Activated naive CD4-positive, alpha-beta T cell treated with anti-CD3 and anti-CD28 coated beads for 36 hours (primary cell): ENCODE measurements at regions of chr3 and their contacts with region 1.

Region 1: GRCh38 chr3:3126477-3127431 is at the start of gene TRNT1:
- DNase-seq: peak; percentile 96
- H3K4me3 Mint-ChIP-seq: peak within 1 kb of the TSS; percentile 97
- H3K27ac Mint-ChIP-seq: peak within 1 kb of the TSS; percentile 98
- H3K4me1 Mint-ChIP-seq: peaks cover 36% of the 10 kb centered on the region
- H3K27me3 Mint-ChIP-seq: no peaks in the 10 kb centered on the region
- total RNA-seq, gene TRNT1: 42.3 to 49.4 TPM

Region 2: DNA sequence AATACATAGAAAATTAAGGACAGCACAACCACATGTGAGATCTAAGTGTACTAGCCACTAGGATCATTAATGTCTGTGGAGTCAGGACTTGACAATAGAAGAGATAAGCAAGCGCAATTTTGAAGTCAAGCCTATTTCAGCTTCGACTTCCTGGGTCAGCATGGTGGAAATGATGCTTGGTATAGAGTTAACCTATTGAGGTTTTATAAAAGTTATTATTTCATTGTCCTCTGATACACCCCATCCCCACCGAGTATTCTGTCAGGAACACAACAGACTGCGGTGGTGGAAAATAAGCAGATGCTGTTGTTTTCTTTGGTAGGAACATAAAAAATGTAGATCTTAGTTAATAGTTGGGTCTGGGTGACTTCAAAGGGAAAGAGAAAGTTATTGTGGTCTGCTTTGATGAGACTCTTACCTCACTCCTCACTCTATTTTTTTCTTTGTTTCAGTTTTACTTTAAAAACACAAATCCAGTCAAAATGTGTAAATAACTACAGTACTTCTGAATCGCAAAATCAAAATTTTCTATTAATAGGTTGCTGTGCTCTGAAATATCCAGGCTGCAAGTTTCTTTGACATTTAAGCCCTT is 98.7 kb before region 1 on chr3:
- CTCF ChIA-PET with region 1: no interaction called
- intact Hi-C with region 1: loop called (anchors 2 kb)
- DNase-seq: no peak
- H3K4me3 Mint-ChIP-seq: no peak overlapping the region
- H3K27ac Mint-ChIP-seq: no peak overlapping the region
- H3K4me1 Mint-ChIP-seq: peaks cover 11% of the 10 kb centered on the region
- H3K27me3 Mint-ChIP-seq: no peaks in the 10 kb centered on the region